ENCODE measurements at regions of chr4 and their contacts with region 1.

Region 1: DNA sequence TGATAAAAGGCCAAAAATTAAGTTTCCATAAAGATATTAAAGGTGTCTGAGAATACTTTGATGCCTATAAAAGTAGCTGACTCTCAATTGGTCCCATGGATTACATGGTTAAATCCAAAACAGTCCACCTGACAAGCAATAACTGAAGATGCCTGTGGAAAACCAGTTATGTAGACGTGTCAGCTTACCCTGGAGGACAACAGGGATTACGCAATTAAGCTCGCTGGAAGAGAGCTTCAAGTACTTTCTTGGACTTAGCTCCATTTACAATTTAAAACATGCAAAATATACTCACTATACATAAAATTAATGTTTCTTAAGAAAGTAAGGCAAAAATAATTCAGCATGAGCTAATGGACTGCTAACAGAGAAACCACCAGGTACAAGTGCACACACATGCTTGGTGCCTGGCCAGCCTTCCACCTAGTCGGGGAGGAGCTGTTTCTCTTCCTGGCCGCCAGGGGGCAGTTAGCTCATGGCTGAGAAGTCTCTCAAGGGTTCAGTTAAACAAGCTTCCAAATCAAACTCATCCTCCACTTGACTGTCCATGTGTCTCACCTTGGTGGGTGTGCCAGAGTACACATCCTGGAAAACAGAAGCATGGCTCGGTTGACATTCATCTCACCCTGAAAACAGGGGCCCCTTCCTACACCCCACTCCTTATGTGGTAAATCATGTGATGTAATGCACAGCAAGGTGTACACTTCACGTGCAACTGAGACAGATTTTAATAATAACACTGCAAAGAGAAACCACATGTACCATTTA is 9.2 kb upstream of the FAM53A start:
- DNase-seq: peak; percentile 59 to 84 (median 76)
- ATAC-seq: peak; percentile 96 to 98
- H3K4me3 Mint-ChIP-seq: no peak overlapping the region
- H3K27ac Mint-ChIP-seq: peak overlapping the region in 8 of 10 donors; percentile 41 to 82 (median 76)
- H3K4me1 Mint-ChIP-seq: peaks cover 0 to 5% (median 3%) of the 10 kb centered on the region in 4 donors
- H3K27me3 Mint-ChIP-seq: no peaks in the 10 kb centered on the region

Region 2: GRCh38 chr4:1674682-1675081 is 18.6 kb before region 1 on chr4:
- POLR2A ChIA-PET with region 1: no interaction called
- DNase-seq: no peak
- ATAC-seq: no peak
- H3K4me3 Mint-ChIP-seq: peak overlapping the region in 1 of 10 donors; percentile 29
- H3K27ac Mint-ChIP-seq: no peak overlapping the region
- H3K4me1 Mint-ChIP-seq: peaks cover 0 to 2% (median under 1%) of the 10 kb centered on the region in 4 donors
- H3K27me3 Mint-ChIP-seq: peaks cover 0 to 5% (median 0%) of the 10 kb centered on the region in 5 donors

Region 3: GRCh38 chr4:1712216-1713002 is 19.1 kb after region 1 on chr4 and contains the start of gene SLBP:
- POLR2A ChIA-PET with region 1: interaction called, 33 read pairs
- DNase-seq: peak; percentile 96 to 99 (median 98)
- ATAC-seq: peak; percentile 86 to 88
- H3K4me3 Mint-ChIP-seq: peak within 1 kb of the TSS; percentile 91 to 97 (median 94)
- H3K27ac Mint-ChIP-seq: peak within 1 kb of the TSS; percentile 91 to 97 (median 96)
- H3K4me1 Mint-ChIP-seq: peaks cover 20 to 76% (median 58%) of the 10 kb centered on the region in 4 donors
- H3K27me3 Mint-ChIP-seq: no peaks in the 10 kb centered on the region
- polyA plus RNA-seq, gene SLBP: 42.6 to 49.3 (median 46.6) TPM

Region 4: GRCh38 chr4:1721004-1721665 is 27.8 kb after region 1 on chr4 and contains the starts of genes TACC3 and TMEM129:
- POLR2A ChIA-PET with region 1: interaction called, 85 read pairs
- DNase-seq: peak; percentile 91 to 98 (median 96)
- ATAC-seq: peak; percentile 86 to 88
- H3K4me3 Mint-ChIP-seq: peak within 1 kb of the TSS; percentile 84 to 95 (median 91)
- H3K27ac Mint-ChIP-seq: peak within 1 kb of the TSS; percentile 96 to 100 (median 99)
- H3K4me1 Mint-ChIP-seq: peaks cover 24 to 65% (median 58%) of the 10 kb centered on the region in 4 donors
- H3K27me3 Mint-ChIP-seq: no peaks in the 10 kb centered on the region
- polyA plus RNA-seq, gene TACC3: 38.7 to 91.6 (median 61.2) TPM
- polyA plus RNA-seq, gene TMEM129: 26.9 to 41.7 (median 28.4) TPM

Region 5: DNA sequence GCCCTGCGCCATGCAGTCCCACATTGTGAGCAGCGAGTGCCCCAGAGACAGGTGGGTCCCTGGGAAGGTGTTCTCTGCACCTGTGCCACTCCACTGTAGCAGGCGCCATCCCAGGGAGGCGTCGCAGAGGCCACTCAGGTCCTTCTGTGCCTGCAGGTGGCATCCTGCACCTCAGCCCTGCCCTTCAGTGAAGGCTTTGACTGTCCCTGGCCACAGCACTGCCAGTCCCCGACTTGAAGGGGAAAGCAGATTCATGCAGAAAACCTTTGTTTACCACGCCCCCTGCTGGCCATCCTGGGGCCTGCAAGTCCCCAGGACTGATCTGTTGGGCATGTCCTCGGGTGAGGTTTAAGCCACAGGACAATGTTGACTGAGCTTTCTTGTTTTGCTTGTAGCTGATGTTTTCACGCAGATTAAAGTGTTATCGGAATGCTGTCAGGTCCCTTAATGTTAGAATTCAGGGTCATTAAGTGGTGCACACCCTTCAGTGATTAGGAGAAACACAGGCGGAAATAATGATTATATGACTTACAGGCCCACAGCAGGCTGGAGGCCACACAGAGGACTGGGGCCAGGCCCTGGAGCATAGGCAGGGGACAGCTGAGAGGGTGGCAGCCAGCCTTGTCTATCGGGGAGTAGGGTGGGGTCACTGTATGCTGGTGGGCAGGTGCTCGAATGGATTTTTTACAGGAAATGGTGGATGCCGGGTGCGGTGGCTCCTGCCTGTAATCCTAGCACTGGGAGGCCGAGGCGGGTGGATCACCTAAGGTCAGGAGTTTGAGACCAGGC is 33.0 kb after region 1 on chr4:
- POLR2A ChIA-PET with region 1: interaction called, 85 read pairs
- DNase-seq: peak; percentile 79 to 93 (median 87)
- ATAC-seq: peak; percentile 42
- H3K4me3 Mint-ChIP-seq: peak overlapping the region in 9 of 10 donors; percentile 27 to 89 (median 68)
- H3K27ac Mint-ChIP-seq: peak overlapping the region; percentile 41 to 90 (median 79)
- H3K4me1 Mint-ChIP-seq: peaks cover 37 to 80% (median 71%) of the 10 kb centered on the region in 4 donors
- H3K27me3 Mint-ChIP-seq: no peaks in the 10 kb centered on the region

Region 6: GRCh38 chr4:2080429-2081300 is 387.4 kb after region 1 on chr4:
- POLR2A ChIA-PET with region 1: no interaction called
- DNase-seq: peak in 1 of 10 donors; percentile 57
- ATAC-seq: no peak
- H3K4me3 Mint-ChIP-seq: no peak overlapping the region
- H3K27ac Mint-ChIP-seq: no peak overlapping the region
- H3K4me1 Mint-ChIP-seq: no peaks in the 10 kb centered on the region
- H3K27me3 Mint-ChIP-seq: peaks cover 0 to 2% (median 0%) of the 10 kb centered on the region in 5 donors

Measured in naive thymus-derived CD8-positive, alpha-beta T cell (primary cell).